Posterior cingulate gyrus (tissue), 11 donors: ENCODE measurements at regions of chr11 and their contacts with region 1.

Region 1: GRCh38 chr11:118689851-118690552 is 10.6 kb upstream of the TREH start:
- DNase-seq: peak; percentile 89 to 99 (median 96)

Region 2: GRCh38 chr11:118791111-118791965 is 101.3 kb after region 1 on chr11 and contains the start of gene DDX6:
- intact Hi-C with region 1: loop called (anchors 1 kb)
- DNase-seq: peak; percentile 82 to 98 (median 91)

Region 3: DNA sequence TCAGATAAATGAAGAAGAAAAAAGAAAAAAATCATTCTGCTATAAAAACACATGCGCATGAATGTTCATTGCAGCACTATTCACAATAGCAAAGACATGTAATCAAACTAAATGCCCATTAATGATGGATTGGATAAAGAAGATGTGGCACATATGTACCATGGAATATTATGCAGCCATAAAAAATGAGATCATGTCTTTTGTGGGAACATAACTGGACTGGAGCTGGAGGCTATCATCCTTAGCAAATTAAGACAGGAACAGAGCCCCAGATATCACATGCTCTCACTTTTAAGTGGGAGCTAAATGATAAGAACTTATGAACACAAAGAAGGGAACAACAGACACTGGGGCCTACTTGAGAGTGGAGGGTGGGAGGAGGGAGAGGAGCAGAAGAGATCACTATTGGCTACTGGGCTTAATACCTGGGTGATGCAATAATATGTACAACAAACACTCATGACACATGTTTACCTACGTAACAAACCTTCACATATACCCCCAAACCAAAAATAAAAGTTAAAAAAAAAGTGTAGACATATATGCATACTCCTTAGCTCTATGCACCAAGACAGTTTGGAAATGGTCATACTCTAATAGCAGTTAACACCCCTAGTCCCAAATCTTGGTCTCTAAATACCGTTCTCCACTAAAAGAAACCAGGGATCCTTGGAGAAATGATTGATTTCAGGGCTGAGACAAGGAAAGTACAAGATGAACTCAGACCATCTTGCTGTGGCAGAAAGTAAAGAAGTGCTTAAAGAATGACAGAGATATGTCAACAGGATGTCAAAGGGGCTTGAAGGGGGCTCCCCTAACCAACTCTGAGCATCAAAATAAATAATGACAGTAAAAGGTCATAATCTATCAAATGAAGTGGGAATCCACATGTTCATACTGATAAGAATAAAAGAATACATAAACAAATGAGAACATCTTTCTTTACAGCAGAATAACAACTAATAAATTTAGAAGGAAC is 118.1 kb after region 1 on chr11:
- intact Hi-C with region 1: no loop called
- DNase-seq: no peak

Region 4: GRCh38 chr11:118956094-118956846 is 266.3 kb after region 1 on chr11 and contains the start of gene UPK2:
- intact Hi-C with region 1: loop called (anchors 2 kb)
- DNase-seq: peak; percentile 80 to 98 (median 92)